ENCODE measurements at regions of chr4 and their contacts with region 1.

Region 1: GRCh38 chr4:88628759-88629158 is 36.5 kb downstream of the HERC3 start:
- DNase-seq: peak; percentile 84
- H3K4me3 Mint-ChIP-seq: peak overlapping the region; percentile 35
- H3K27ac Mint-ChIP-seq: peak overlapping the region; percentile 91
- H3K4me1 Mint-ChIP-seq: peaks cover 19% of the 10 kb centered on the region
- H3K27me3 Mint-ChIP-seq: no peaks in the 10 kb centered on the region
- CTCF ChIP-seq: peak; percentile 17

Region 2: DNA sequence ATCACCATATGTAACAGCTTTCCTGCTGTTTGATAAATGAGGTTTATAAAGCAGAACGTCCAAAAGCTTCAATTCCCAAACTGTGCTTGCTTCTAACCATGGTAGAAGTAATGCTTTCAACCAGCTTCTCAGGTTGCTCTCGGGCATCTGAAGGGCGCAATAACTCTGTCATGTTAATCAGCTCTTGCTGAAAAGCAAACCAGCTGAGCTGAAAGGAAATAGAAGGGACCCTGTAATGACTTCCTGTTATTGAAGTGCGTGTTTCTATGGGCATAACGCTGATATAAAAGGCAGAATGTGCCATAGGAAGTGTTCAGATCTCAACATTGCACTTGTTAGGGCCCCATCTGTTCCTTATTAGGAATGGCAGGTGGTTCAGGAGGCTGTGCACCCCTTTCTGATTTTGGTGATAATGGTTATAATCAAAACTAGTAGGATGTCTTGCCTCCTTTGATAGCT is 15.3 kb before region 1 on chr4:
- CTCF ChIA-PET with region 1: interaction called, 8 read pairs
- POLR2A ChIA-PET with region 1: interaction called, 86 read pairs
- intact Hi-C with region 1: loop called (anchors 1 kb)
- DNase-seq: no peak
- H3K4me3 Mint-ChIP-seq: no peak overlapping the region
- H3K27ac Mint-ChIP-seq: peak overlapping the region; percentile 59
- H3K4me1 Mint-ChIP-seq: peaks cover 56% of the 10 kb centered on the region
- H3K27me3 Mint-ChIP-seq: no peaks in the 10 kb centered on the region
- CTCF ChIP-seq: no peak